ENCODE measurements at regions of chr14 and their contacts with region 1.

Region 1: DNA sequence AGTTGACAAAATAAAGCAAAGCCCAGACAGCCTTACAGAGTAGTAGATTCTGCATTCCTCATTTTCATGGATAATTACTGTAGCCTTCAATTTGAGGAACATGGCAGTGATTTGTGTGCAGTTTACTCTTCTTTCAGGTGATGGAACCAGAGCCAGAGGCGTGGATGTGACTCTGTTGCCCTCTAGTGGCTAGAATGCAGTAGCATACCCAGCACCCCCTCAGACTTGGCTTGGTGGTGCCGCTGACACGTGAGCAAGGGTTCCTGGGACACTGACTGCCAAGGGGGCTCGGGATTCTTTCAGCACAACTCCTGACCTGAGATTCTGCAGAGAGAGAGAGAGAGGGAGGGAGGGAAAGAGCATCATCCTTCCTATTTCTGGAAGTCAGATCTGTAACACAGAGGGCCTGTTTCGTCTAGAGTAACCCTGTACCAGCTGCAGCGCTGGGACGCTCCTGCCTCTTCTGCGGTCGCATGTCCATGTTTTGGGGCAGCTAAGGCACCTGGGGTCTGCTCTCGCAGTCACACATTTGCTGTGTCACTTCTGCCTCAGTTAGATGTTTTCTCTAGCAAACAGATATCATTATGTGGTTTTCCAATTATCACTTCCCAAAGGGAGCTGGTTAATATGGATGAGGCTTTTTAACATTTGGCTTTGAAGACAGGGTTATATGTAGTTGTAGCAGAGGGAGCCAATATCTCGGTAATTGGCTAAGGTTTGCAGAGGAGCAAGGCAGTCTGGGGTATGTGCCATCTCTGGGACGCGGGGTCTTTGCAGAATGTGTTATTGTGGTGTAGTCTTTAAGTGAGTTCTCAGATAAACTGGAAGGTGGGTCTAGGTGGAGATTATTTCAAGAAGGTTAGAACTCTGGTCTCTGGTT is 428.1 kb downstream of the NRXN3 start:
- DNase-seq: no peak

Region 2: GRCh38 chr14:77654001-77654441 is 944.3 kb before region 1 on chr14:
- intact Hi-C with region 1: loop called (anchors 10 kb)
- DNase-seq: no peak